Mucosa of descending colon (tissue), 3 donors: ENCODE measurements at regions of chr15 and their contacts with region 1.

Region 1: GRCh38 chr15:94163999-94164807 is 67.2 kb upstream of the MCTP2 start:
- DNase-seq: peak in 2 of 3 donors; percentile 41 to 74
- ATAC-seq: peak; percentile 89
- H3K4me3 ChIP-seq: no peak overlapping the region
- H3K4me1 ChIP-seq: no peaks in the 10 kb centered on the region
- CTCF ChIP-seq: peak; percentile 73

Region 2: GRCh38 chr15:94061041-94061440 is 103.2 kb before region 1 on chr15:
- intact Hi-C with region 1: no loop called
- DNase-seq: no peak
- ATAC-seq: no peak
- H3K4me3 ChIP-seq: no peak overlapping the region
- H3K4me1 ChIP-seq: no peaks in the 10 kb centered on the region
- CTCF ChIP-seq: no peak

Region 3: DNA sequence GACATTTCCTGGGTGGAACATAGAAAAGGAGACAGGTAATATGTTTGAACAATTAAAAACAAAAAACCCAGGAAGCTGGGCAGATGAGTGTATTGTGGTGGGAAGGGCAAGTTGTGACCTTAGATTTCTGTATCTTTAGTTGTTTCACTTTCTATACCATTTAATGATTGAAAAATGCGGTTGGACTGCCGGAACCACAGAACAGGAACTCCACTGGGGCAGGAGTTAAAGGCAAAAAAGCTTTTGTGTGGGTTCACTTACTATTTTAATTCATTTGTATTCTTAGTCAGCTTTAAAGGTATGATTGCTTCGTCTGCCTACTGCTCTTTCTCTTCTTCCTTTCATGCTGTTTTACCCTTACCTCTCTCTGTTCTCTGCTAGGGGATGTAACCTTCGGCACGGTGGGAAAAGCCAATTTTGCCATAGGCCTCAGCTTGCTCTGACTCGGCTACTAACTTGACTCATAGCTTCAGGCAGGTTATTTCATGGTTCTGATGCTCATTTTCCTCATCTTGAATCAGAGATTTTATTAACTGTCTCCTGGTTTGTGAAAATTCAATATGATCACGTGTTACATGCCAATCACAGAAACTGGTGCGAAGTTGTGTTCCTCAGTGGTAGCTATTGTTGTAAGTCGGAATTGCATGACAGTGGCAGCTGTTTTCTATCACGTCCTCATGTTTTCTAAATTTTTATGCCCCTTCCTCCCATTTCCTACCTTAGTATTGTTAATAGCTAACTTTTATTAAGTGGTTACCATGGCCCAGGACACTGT is 65.6 kb after region 1 on chr15:
- intact Hi-C with region 1: loop called in 1 of 2 experiments (anchors 10 kb)
- DNase-seq: peak in 1 of 3 donors; percentile 54
- ATAC-seq: peak; percentile 25
- H3K4me3 ChIP-seq: no peak overlapping the region
- H3K4me1 ChIP-seq: peaks cover 30% of the 10 kb centered on the region
- CTCF ChIP-seq: no peak

Region 4: DNA sequence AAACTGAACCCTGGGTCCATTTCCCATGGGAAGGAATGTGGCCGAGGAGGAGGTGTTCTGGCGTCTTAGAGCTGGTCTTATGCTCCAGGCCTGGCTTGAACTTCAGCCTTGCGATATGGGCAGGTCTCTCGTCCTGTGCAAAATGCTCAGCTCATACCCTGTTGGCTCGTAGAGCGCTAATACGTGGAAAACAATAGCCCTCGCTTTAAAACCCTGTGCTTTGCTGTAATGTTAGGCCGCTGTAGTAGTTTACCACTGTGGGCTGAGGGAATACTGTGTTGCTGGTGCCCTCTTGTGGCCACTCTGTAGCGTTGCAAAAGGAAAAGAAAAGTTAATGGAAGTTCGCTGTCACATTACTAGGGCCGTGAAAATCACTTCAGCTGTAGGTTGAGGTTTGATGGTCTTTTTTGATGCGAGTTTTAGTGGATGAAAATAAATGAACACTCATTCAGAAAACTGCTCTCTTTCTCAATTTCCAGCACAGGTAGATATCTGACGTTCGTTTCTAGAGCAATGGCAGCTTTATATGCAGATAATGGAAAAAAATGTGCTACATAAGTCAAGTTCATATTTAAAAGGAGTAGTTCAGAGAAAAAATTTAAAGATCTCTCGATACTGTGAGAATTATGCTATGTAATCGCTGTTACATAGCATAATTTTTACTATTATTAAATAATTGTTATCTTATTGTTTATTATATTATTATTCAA is 160.1 kb after region 1 on chr15:
- intact Hi-C with region 1: loop called (anchors 5 kb)
- DNase-seq: peak in 2 of 3 donors; percentile 41 to 48
- ATAC-seq: peak; percentile 95
- H3K4me3 ChIP-seq: no peak overlapping the region
- H3K4me1 ChIP-seq: peaks cover 22% of the 10 kb centered on the region
- CTCF ChIP-seq: peak; percentile 64